Esophagus muscularis mucosa (tissue), 4 donors: ENCODE measurements at regions of chr5 and their contacts with region 1.

Region 1: GRCh38 chr5:149990518-149991376 is 9.7 kb downstream of the TIGD6 start:
- DNase-seq: peak; percentile 93
- H3K4me3 ChIP-seq: no peak overlapping the region
- H3K27ac ChIP-seq: no peak overlapping the region
- H3K4me1 ChIP-seq: peaks cover 0 to 3% (median 0%) of the 10 kb centered on the region in 4 donors
- H3K27me3 ChIP-seq: no peaks in the 10 kb centered on the region
- CTCF ChIP-seq: peak; percentile 87 to 94 (median 94)
- EP300 ChIP-seq: no peak
- POLR2A ChIP-seq: no peak

Region 2: DNA sequence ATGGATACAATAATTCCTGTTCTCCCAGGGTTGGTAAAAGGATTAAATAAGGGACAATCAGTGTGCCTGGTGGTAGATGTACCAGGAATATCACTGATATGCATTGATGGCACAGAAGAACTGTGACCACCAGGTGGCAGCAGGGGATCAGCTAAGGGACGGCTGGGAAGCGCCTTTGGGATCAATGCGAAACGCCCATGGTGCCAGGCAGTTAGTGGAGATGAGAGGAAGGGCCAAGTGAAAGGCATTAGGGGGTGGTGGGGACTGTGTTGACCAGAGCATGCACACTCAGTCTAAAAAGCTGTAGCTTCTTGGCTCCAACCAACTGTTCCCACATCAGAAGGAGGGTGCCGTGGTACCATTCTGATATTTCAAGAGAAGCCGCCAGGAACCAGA is 353.9 kb before region 1 on chr5:
- intact Hi-C with region 1: loop called (anchors 1 kb)
- DNase-seq: no peak
- H3K4me3 ChIP-seq: no peak overlapping the region
- H3K27ac ChIP-seq: no peak overlapping the region
- H3K4me1 ChIP-seq: peaks cover 0 to 22% (median 13%) of the 10 kb centered on the region in 4 donors
- H3K27me3 ChIP-seq: no peaks in the 10 kb centered on the region
- CTCF ChIP-seq: peak; percentile 68 to 89 (median 72)
- EP300 ChIP-seq: no peak
- POLR2A ChIP-seq: no peak

Region 3: DNA sequence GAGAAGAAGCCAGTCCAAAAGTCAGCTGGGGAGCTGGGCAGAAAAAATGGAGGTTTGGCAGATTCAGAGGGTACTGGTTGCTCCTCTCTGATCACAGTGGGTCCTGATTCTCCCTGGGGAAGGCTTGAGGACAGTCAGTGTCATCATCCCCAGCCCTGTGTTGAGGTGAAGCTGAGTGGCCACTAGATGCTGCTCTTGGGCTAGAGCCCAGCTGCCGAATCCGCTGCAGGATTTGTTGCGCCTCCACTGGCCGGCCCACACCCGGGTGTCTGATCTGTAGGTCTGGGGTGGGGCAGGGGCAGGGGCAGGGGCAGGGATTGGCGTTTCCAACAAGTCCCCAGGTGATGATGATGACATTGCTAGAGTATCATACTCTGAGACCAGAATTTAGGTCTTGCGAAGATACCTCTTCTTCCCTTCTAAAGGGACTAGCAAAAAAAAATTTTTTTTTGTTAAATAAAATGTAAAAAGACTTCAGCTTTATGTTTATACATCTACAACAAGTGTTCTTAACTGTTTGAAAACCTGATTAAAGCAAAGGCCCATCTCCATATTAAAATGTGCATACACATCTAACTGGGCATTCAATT is 153.0 kb before region 1 on chr5:
- intact Hi-C with region 1: loop called (anchors 5 kb)
- DNase-seq: no peak
- H3K4me3 ChIP-seq: no peak overlapping the region
- H3K27ac ChIP-seq: no peak overlapping the region
- H3K4me1 ChIP-seq: peaks cover 0 to 16% (median 3%) of the 10 kb centered on the region in 4 donors
- H3K27me3 ChIP-seq: no peaks in the 10 kb centered on the region
- CTCF ChIP-seq: peak in 2 of 3 experiments; percentile 18 to 32
- EP300 ChIP-seq: no peak
- POLR2A ChIP-seq: no peak